ENCODE measurements at regions of chr2 and their contacts with region 1.

Region 1: DNA sequence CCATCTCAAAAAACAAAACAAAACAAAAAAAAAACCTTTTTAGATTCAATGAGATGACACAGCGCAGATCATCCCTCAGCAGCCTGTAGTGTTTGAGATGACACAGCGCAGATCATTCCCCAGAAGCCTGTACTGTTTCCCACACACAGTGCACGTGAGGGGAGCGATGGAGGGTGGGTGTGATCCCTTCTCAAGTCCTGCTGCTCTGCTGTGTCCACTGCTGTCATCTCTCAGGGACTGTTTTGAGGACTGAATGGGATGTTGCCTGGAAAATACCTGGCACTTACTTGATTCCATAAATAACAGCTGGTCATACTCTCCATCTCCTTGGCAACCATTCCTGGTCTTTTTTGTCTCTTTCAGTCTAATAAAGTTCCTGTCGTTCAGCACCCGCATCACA is 25.7 kb downstream of the TGOLN2 start:
- DNase-seq: no peak
- ATAC-seq: no peak
- H3K4me3 ChIP-seq: no peak overlapping the region
- H3K4me3 Mint-ChIP-seq: no peak overlapping the region
- H3K27ac ChIP-seq: no peak overlapping the region
- H3K27ac Mint-ChIP-seq: no peak overlapping the region
- H3K4me1 ChIP-seq: peaks cover 0 to 14% of the 10 kb centered on the region in 2 experiments
- H3K4me1 Mint-ChIP-seq: peaks cover 10 to 16% (median 13%) of the 10 kb centered on the region in 3 donors
- H3K27me3 ChIP-seq: peaks cover 0 to 32% of the 10 kb centered on the region in 2 experiments
- H3K27me3 Mint-ChIP-seq: peaks cover 3 to 13% of the 10 kb centered on the region in 2 donors

Region 2: GRCh38 chr2:85017411-85018048 is 284.6 kb before region 1 on chr2:
- CTCF ChIA-PET with region 1: interaction called, 4 to 10 read pairs
- POLR2A ChIA-PET with region 1: interaction called in 1 of 2 experiments, 3 read pairs
- DNase-seq: peak in 1 of 35 experiments; percentile 38
- ATAC-seq: no peak
- H3K4me3 ChIP-seq: no peak overlapping the region
- H3K4me3 Mint-ChIP-seq: no peak overlapping the region
- H3K27ac ChIP-seq: no peak overlapping the region
- H3K27ac Mint-ChIP-seq: peak overlapping the region in 1 of 2 donors; percentile 27
- H3K4me1 ChIP-seq: peaks cover 6 to 14% of the 10 kb centered on the region in 2 experiments
- H3K4me1 Mint-ChIP-seq: peaks cover 69 to 79% (median 71%) of the 10 kb centered on the region in 3 donors
- H3K27me3 ChIP-seq: no peaks in the 10 kb centered on the region
- H3K27me3 Mint-ChIP-seq: no peaks in the 10 kb centered on the region

Region 3: DNA sequence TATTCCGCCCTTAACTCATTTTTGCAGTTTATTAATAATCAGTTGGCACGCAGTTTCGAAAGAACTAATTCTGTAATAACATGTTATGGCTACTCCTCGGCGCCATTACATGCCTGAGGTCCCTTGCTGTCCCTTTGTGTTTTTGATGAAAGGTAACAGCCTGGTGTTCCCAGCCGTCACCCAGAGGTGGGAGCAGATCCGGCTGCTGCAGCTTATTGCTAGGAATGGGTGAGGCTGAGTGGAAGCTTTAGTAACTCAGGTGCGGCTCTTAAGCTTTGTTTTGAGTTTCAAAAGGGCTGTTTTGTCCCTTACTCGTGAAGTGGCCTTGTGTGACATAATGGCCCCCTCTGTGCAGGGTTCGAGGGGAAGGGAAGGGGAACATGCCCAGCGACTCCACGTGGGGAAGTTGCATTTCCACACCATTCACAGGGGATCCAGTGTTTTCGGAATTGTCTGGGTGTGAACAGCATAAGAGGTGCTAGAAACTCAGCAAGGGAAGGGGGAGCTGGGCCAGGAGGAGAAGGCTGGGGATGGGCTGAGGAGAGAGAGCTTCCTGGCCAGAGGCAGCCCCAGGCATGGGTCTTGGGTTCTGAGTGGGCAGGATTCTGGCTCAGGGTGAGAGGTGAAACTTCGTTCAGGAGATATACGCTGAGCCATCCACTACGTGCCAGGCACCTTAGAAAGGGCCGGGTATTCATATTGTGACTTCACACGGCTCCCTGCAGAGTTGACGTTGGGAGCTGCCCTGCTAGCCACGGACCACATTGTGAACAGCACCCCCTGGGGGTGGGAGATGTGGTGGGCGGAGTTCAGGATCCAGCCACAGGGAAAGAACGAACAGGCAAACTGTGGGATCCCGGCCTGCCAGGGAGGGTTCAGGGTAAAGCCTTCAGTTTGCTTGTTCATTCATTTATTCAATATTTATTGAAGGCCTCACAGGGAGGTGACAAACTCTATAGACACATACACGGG is 58.7 kb before region 1 on chr2:
- CTCF ChIA-PET with region 1: no interaction called
- POLR2A ChIA-PET with region 1: no interaction called
- DNase-seq: peak in 5 of 35 experiments; percentile 3 to 23 (median 7)
- ATAC-seq: no peak
- H3K4me3 ChIP-seq: no peak overlapping the region
- H3K4me3 Mint-ChIP-seq: no peak overlapping the region
- H3K27ac ChIP-seq: no peak overlapping the region
- H3K27ac Mint-ChIP-seq: no peak overlapping the region
- H3K4me1 ChIP-seq: no peaks in the 10 kb centered on the region
- H3K4me1 Mint-ChIP-seq: peaks cover 5 to 9% (median 5%) of the 10 kb centered on the region in 3 donors
- H3K27me3 ChIP-seq: peaks cover 0 to 17% of the 10 kb centered on the region in 2 experiments
- H3K27me3 Mint-ChIP-seq: peaks cover 18 to 27% of the 10 kb centered on the region in 2 donors

Region 4: GRCh38 chr2:85266146-85267041 is 35.7 kb before region 1 on chr2:
- CTCF ChIA-PET with region 1: interaction called, 9 to 25 read pairs
- POLR2A ChIA-PET with region 1: no interaction called
- DNase-seq: peak; percentile 4 to 82 (median 51)
- ATAC-seq: peak in 2 of 4 experiments; percentile 51 to 65
- H3K4me3 ChIP-seq: no peak overlapping the region
- H3K4me3 Mint-ChIP-seq: no peak overlapping the region
- H3K27ac ChIP-seq: no peak overlapping the region
- H3K27ac Mint-ChIP-seq: no peak overlapping the region
- H3K4me1 ChIP-seq: no peaks in the 10 kb centered on the region
- H3K4me1 Mint-ChIP-seq: no peaks in the 10 kb centered on the region
- H3K27me3 ChIP-seq: peaks cover 0 to 18% of the 10 kb centered on the region in 2 experiments
- H3K27me3 Mint-ChIP-seq: peaks cover 2 to 10% of the 10 kb centered on the region in 2 donors

Region 5: DNA sequence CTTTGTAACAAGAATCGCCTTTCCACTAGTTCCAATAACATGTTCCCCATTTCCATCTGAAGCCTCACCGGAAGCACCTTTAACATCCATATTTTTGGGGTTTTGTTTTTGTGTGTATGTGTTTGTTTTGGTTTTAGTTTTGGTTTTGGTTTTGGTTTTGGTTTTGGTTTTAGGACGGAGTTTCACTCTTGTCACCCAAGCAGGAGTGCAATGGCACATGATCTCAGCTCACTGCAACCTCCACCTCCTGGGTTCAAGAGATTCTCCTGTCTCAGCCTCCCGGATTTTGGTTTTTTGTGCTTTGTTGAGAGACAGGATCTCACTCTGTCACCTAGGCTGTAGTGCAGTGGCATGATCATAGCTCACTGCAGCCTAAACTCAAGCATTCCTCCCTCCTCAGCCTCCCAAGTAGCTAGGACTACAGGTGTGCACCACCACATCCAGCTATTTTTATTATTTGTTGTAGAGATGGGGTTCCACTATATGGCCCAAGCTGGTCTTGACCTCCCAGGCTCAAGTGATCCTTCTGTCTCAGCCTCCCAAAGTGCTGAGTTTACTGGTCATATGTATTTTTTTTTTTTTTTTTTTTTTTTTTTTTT is 10.6 kb before region 1 on chr2:
- CTCF ChIA-PET with region 1: interaction called, 6 to 10 read pairs
- POLR2A ChIA-PET with region 1: interaction called in 1 of 2 experiments, 3 read pairs
- DNase-seq: peak in 3 of 35 experiments; percentile 16 to 66 (median 29)
- ATAC-seq: peak; percentile 45 to 77 (median 54)
- H3K4me3 ChIP-seq: peak overlapping the region in 1 of 2 donors; percentile 2
- H3K4me3 Mint-ChIP-seq: peak overlapping the region; percentile 32 to 60 (median 57)
- H3K27ac ChIP-seq: peak overlapping the region; percentile 43
- H3K27ac Mint-ChIP-seq: peak overlapping the region; percentile 82 to 92
- H3K4me1 ChIP-seq: peaks cover 0 to 9% of the 10 kb centered on the region in 2 experiments
- H3K4me1 Mint-ChIP-seq: peaks cover 20 to 22% (median 22%) of the 10 kb centered on the region in 3 donors
- H3K27me3 ChIP-seq: no peaks in the 10 kb centered on the region
- H3K27me3 Mint-ChIP-seq: no peaks in the 10 kb centered on the region

Region 6: GRCh38 chr2:85354286-85355072 is 52.4 kb after region 1 on chr2 and contains the starts of genes ELMOD3 and RETSAT:
- CTCF ChIA-PET with region 1: interaction called in 1 of 2 experiments, 10 read pairs
- POLR2A ChIA-PET with region 1: no interaction called
- DNase-seq: peak; percentile 88 to 99 (median 97)
- ATAC-seq: peak; percentile 98 to 100 (median 99)
- H3K4me3 ChIP-seq: peak within 1 kb of the TSS; percentile 74 to 81
- H3K4me3 Mint-ChIP-seq: peak within 1 kb of the TSS; percentile 92 to 100 (median 97)
- H3K27ac ChIP-seq: peak within 1 kb of the TSS; percentile 77
- H3K27ac Mint-ChIP-seq: peak within 1 kb of the TSS; percentile 99
- H3K4me1 ChIP-seq: peaks cover 13 to 29% of the 10 kb centered on the region in 2 experiments
- H3K4me1 Mint-ChIP-seq: peaks cover 54 to 59% (median 59%) of the 10 kb centered on the region in 3 donors
- H3K27me3 ChIP-seq: no peaks in the 10 kb centered on the region
- H3K27me3 Mint-ChIP-seq: no peaks in the 10 kb centered on the region
- total RNA-seq, gene ELMOD3: 18.8 to 30.9 (median 25.2) TPM
- total RNA-seq, gene RETSAT: 24.2 to 36.3 (median 26.5) TPM

Measured in T-cell (primary cell).